Activated CD4-positive, alpha-beta memory T cell treated with anti-CD3 and anti-CD28 coated beads, Interleukin-2, amount 10 ng/mL, durations not matched to agents 7 days and 5 days (primary cell): ENCODE measurements at regions of chr5 and their contacts with region 1.

Region 1: DNA sequence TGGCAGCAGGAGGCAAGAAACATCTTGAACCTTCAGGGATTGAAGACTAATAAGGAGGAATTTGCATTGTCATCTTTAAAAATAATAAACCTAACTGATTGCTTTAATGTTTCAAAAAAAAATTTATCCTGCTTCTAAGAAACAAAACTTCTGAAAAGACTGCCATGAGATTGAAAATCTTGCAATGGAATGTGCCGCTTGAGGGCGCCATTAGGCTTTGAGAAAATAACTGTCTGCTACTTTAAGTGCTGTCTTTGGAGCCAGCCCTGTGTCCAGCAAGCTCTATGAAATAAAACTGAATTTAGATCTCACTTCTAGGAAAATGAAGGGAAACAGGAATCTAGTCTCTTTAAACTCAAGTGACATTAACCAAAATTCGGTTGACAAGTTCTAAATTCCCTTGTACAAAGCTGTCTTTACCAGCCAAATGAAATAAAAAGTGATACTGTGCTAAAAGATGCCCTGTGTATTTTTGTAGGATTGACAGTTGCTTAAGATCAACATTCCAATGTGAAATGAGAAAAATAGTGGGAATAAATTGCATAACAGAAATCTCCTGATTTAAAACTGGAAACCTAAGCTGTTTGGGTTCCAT is 79.4 kb downstream of the ESM1 start:
- DNase-seq: peak; percentile 80
- H3K4me3 Mint-ChIP-seq: no peak overlapping the region
- H3K27ac Mint-ChIP-seq: no peak overlapping the region
- H3K4me1 Mint-ChIP-seq: peaks cover 51% of the 10 kb centered on the region
- H3K27me3 Mint-ChIP-seq: peaks cover 46% of the 10 kb centered on the region

Region 2: DNA sequence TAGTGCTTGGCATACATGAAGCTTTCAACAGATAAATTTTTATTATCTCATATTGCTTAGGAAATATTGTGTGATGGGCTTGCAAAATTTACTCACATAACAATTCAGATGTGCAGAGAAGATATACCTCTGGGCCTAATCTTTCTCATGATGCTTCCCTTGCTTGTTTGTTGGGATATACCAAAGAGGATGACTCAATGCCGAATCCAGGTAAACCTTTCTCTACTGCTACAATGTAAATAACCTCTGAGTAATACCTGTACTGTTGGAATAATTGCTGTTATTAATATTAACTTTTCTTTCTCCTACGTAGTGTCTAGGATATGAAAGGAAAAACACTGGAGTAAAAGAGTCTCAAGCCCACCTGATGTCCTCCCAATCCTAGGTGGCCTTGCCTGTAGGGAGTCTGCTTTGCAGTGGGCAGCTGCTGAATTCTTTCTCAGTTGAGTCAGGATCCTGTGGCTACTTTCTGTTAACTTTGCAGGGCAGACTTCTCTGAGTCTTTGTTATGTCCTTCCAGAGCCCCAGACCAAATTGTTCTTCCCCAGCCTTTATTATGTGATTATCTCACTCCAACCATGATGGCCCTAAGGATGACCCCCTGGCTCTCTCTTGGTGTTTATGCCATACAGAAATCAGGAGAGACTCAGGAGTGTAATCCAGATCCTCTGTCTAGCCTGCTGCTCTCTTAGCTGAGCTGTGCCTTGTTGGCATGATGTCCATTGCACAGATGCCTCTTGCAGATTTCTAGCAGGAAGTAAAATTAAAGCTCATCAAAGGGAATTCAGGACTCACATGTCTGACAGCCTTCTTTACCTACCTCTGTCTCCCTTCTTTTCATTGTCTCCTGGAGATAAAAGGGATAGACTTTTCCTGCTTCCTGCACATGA is 180.4 kb before region 1 on chr5:
- CTCF ChIA-PET with region 1: no interaction called
- POLR2A ChIA-PET with region 1: no interaction called
- DNase-seq: no peak
- H3K4me3 Mint-ChIP-seq: no peak overlapping the region
- H3K27ac Mint-ChIP-seq: no peak overlapping the region
- H3K4me1 Mint-ChIP-seq: peaks cover 6% of the 10 kb centered on the region
- H3K27me3 Mint-ChIP-seq: peaks cover 5% of the 10 kb centered on the region

Region 3: DNA sequence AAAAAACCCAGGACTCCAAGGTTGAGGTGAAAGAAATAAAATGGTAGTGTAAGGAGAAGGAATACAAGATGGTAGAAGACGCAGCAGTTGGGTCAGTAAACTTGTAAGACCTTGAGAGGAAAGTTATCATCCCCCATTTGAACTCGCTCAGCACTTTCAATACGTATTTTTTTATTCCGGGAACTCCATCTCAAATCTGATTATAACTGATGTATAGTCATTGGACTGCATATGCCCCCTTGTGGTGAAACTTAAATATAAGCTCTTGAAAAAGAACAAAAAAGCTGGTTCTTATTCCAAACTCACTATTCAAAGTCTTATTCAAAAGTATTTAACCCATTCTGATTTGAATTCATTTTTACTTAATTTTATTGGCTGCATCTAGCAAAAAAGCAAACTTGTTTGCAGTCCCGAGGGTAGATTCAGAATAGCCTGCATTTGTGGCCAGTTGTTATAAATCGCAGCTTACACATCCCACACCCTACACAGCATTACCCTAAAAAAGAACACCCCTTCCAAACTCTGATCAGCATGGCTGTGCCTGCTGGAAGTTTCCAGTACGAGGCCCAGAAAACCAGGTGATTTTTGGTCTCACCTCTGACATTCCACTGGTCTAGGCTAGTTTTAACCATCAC is 38.6 kb before region 1 on chr5:
- CTCF ChIA-PET with region 1: interaction called, 10 read pairs
- POLR2A ChIA-PET with region 1: no interaction called
- DNase-seq: no peak
- H3K4me3 Mint-ChIP-seq: no peak overlapping the region
- H3K27ac Mint-ChIP-seq: no peak overlapping the region
- H3K4me1 Mint-ChIP-seq: peaks cover 20% of the 10 kb centered on the region
- H3K27me3 Mint-ChIP-seq: peaks cover 61% of the 10 kb centered on the region

Region 4: DNA sequence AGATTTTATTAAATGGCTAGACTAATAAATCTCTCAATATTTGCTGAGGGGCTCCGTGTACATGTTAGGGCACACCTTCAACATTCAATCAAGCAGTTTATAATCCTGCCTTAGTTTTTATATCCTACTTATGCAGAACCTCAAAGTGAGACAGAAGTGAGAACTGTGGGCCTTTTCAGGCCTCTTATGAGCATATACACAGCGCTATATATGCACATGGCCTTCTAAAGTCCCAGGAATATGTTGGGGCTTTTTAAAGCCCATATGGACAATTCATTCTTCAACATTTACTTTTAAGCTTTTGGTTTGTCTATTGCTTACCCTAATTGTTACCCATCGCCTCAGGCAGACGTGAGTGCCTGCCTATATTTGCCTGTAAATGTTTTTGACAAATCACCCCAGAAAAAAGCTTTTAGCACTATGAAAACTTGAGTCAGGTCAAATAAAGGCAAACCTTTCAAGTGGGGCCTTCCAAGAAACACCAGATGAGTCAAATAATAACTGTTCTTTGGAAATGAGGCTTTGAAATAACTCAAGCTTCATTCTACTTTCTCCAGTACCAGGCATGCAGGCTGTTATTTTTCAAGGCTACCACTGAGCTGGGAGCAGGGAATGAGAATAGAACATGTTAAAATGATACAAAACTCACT is 21.2 kb after region 1 on chr5:
- CTCF ChIA-PET with region 1: interaction called, 20 read pairs
- POLR2A ChIA-PET with region 1: interaction called, 3 read pairs
- DNase-seq: no peak
- H3K4me3 Mint-ChIP-seq: no peak overlapping the region
- H3K27ac Mint-ChIP-seq: peak overlapping the region; percentile 27
- H3K4me1 Mint-ChIP-seq: peaks cover 18% of the 10 kb centered on the region
- H3K27me3 Mint-ChIP-seq: peaks cover 16% of the 10 kb centered on the region

Region 5: GRCh38 chr5:54959673-54960418 is 53.8 kb after region 1 on chr5:
- CTCF ChIA-PET with region 1: interaction called, 13 read pairs
- POLR2A ChIA-PET with region 1: no interaction called
- DNase-seq: peak; percentile 46
- H3K4me3 Mint-ChIP-seq: no peak overlapping the region
- H3K27ac Mint-ChIP-seq: no peak overlapping the region
- H3K4me1 Mint-ChIP-seq: no peaks in the 10 kb centered on the region
- H3K27me3 Mint-ChIP-seq: peaks cover 17% of the 10 kb centered on the region

Region 6: GRCh38 chr5:55146543-55147151 is 240.6 kb after region 1 on chr5:
- CTCF ChIA-PET with region 1: interaction called, 58 read pairs
- POLR2A ChIA-PET with region 1: interaction called, 12 read pairs
- DNase-seq: peak; percentile 89
- H3K4me3 Mint-ChIP-seq: no peak overlapping the region
- H3K27ac Mint-ChIP-seq: peak overlapping the region; percentile 3
- H3K4me1 Mint-ChIP-seq: peaks cover 31% of the 10 kb centered on the region
- H3K27me3 Mint-ChIP-seq: peaks cover 21% of the 10 kb centered on the region

Region 7: GRCh38 chr5:55159763-55160492 is 253.9 kb after region 1 on chr5 and contains the start of gene GPX8:
- CTCF ChIA-PET with region 1: interaction called, 104 read pairs
- POLR2A ChIA-PET with region 1: interaction called, 6 read pairs
- DNase-seq: peak; percentile 28
- H3K4me3 Mint-ChIP-seq: no peak within 1 kb of the TSS
- H3K27ac Mint-ChIP-seq: no peak within 1 kb of the TSS
- H3K4me1 Mint-ChIP-seq: no peaks in the 10 kb centered on the region
- H3K27me3 Mint-ChIP-seq: peaks cover 53% of the 10 kb centered on the region
- total RNA-seq, gene GPX8: not detected